Naive thymus-derived CD4-positive, alpha-beta T cell (primary cell): ENCODE measurements at regions of chr4 and their contacts with region 1.

Region 1: GRCh38 chr4:22688236-22688635 is 4.5 kb upstream of the GBA3 start:
- DNase-seq: no peak
- ATAC-seq: no peak
- H3K4me3 ChIP-seq: no peak overlapping the region
- H3K4me3 Mint-ChIP-seq: no peak overlapping the region
- H3K27ac ChIP-seq: no peak overlapping the region
- H3K27ac Mint-ChIP-seq: peak overlapping the region in 1 of 9 donors; percentile 60
- H3K4me1 ChIP-seq: no peaks in the 10 kb centered on the region
- H3K4me1 Mint-ChIP-seq: peaks cover 3 to 51% (median 31%) of the 10 kb centered on the region in 7 donors
- H3K27me3 ChIP-seq: no peaks in the 10 kb centered on the region
- H3K27me3 Mint-ChIP-seq: peaks cover 0 to 7% (median 0%) of the 10 kb centered on the region in 5 donors

Region 2: DNA sequence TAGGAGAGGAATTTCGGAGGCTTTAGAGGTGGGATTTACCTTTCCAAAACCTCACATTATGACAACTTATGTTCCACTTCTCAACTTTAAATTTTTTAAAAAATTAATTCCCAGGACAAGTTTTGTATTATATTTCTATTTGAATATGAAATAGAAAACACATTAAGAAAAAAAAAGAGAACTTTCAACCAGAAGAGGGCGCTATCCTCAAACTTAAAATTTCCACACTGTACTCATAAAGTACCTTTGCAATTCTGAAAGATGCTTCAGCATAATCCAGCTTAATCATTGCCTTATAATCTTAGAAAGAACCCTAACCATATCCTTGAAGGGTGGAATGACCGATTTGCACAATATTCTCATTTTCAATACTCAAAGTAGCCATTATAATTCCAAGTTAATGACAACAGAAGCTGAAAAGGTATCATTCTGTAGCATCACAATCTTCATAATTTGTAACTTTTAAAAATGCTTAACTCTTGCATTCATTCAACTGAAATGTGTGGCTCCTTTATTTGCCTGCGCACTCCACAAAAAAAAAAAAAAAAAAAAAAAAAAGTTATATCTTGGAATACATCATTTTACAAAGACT is 897.7 kb before region 1 on chr4:
- CTCF ChIA-PET with region 1: interaction called, 3 read pairs
- POLR2A ChIA-PET with region 1: no interaction called
- intact Hi-C with region 1: loop called (anchors 1 kb)
- DNase-seq: peak in 3 of 9 donors; percentile 5 to 13 (median 13)
- ATAC-seq: no peak
- H3K4me3 ChIP-seq: no peak overlapping the region
- H3K4me3 Mint-ChIP-seq: no peak overlapping the region
- H3K27ac ChIP-seq: no peak overlapping the region
- H3K27ac Mint-ChIP-seq: no peak overlapping the region
- H3K4me1 ChIP-seq: no peaks in the 10 kb centered on the region
- H3K4me1 Mint-ChIP-seq: peaks cover 0 to 2% (median 0%) of the 10 kb centered on the region in 7 donors
- H3K27me3 ChIP-seq: no peaks in the 10 kb centered on the region
- H3K27me3 Mint-ChIP-seq: peaks cover 0 to 4% (median 0%) of the 10 kb centered on the region in 5 donors

Region 3: GRCh38 chr4:22410645-22411247 is 277.5 kb before region 1 on chr4:
- CTCF ChIA-PET with region 1: interaction called, 55 read pairs
- POLR2A ChIA-PET with region 1: no interaction called
- intact Hi-C with region 1: loop called (anchors 1 kb)
- DNase-seq: peak in 5 of 9 donors; percentile 8 to 39 (median 18)
- ATAC-seq: no peak
- H3K4me3 ChIP-seq: no peak overlapping the region
- H3K4me3 Mint-ChIP-seq: no peak overlapping the region
- H3K27ac ChIP-seq: no peak overlapping the region
- H3K27ac Mint-ChIP-seq: no peak overlapping the region
- H3K4me1 ChIP-seq: no peaks in the 10 kb centered on the region
- H3K4me1 Mint-ChIP-seq: no peaks in the 10 kb centered on the region
- H3K27me3 ChIP-seq: no peaks in the 10 kb centered on the region
- H3K27me3 Mint-ChIP-seq: no peaks in the 10 kb centered on the region

Region 4: DNA sequence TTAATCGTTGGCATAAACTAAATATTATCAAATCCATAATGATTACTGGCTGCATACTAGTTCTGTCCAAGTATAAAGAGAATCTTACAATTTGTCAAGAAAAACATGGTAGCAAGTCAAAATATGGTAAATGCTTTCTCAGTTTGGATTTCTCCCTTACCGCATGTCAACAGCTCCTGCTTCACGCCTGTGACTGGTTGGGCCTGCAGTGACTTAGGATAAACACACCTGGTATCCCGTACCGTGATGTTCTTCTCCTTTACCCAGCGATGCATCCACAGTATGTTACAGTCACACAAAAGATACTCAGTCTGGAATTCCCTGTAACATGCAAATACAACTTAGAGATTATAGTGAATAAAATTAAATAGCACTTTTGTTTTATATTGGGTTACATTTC is 243.4 kb before region 1 on chr4:
- CTCF ChIA-PET with region 1: no interaction called
- POLR2A ChIA-PET with region 1: no interaction called
- intact Hi-C with region 1: loop called in 1 of 2 experiments (anchors 1 kb)
- DNase-seq: peak in 1 of 9 donors; percentile 7
- ATAC-seq: peak; percentile 29
- H3K4me3 ChIP-seq: no peak overlapping the region
- H3K4me3 Mint-ChIP-seq: peak overlapping the region; percentile 31 to 88 (median 80)
- H3K27ac ChIP-seq: peak overlapping the region; percentile 57
- H3K27ac Mint-ChIP-seq: peak overlapping the region; percentile 85 to 96 (median 94)
- H3K4me1 ChIP-seq: peaks cover 0 to 16% of the 10 kb centered on the region in 2 donors
- H3K4me1 Mint-ChIP-seq: peaks cover 0 to 63% (median 37%) of the 10 kb centered on the region in 7 donors
- H3K27me3 ChIP-seq: no peaks in the 10 kb centered on the region
- H3K27me3 Mint-ChIP-seq: no peaks in the 10 kb centered on the region

Region 5: DNA sequence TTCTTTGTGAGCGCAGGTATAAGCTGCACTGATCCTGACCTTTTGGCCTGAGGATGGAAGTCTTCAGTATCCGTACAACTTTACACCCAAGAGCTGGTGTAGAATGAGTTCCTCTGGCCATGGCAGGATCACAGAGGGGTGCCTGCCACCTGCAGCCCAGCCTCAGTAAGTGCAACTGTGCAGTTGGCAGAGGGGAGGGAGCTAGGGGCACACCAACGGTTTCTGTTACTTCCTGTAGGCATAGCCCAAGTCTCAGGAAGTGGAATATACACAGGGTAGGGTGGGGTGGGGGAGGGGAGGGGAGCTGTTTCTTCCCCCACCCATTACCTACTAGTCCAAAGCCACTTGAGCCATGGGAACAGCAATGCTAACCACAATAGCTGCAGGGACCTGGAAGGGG is 80.9 kb before region 1 on chr4:
- CTCF ChIA-PET with region 1: interaction called, 4 read pairs
- POLR2A ChIA-PET with region 1: no interaction called
- intact Hi-C with region 1: loop called (anchors 1 to 5 kb)
- DNase-seq: peak in 8 of 9 donors; percentile 16 to 74 (median 58)
- ATAC-seq: peak; percentile 97
- H3K4me3 ChIP-seq: no peak overlapping the region
- H3K4me3 Mint-ChIP-seq: peak overlapping the region in 5 of 10 donors; percentile 22 to 63 (median 42)
- H3K27ac ChIP-seq: no peak overlapping the region
- H3K27ac Mint-ChIP-seq: peak overlapping the region in 7 of 9 donors; percentile 13 to 84 (median 62)
- H3K4me1 ChIP-seq: peaks cover 0 to 27% of the 10 kb centered on the region in 2 donors
- H3K4me1 Mint-ChIP-seq: peaks cover 13 to 51% (median 46%) of the 10 kb centered on the region in 7 donors
- H3K27me3 ChIP-seq: no peaks in the 10 kb centered on the region
- H3K27me3 Mint-ChIP-seq: no peaks in the 10 kb centered on the region

Region 6: DNA sequence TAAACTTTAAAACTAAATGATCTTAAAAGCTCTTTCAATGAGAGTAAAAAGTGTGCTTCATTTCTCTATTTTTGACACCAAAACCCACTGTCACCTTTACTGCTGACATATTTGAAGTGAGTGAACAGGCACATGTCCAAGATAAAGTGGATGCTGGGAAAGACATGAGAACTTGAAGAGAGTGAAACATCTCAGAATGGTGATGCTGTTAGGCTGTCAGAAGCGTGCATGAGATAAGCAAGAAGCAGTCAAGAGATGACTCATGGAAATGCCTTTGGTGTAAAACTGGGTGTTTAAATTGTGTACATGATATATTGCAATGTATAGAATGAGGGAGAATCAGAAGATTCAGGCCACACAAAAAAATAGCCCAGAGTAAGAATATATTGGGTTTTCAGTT is 17.3 kb before region 1 on chr4:
- CTCF ChIA-PET with region 1: interaction called, 3 read pairs
- POLR2A ChIA-PET with region 1: no interaction called
- intact Hi-C with region 1: loop called in 1 of 2 experiments (anchors 1 kb)
- DNase-seq: no peak
- ATAC-seq: no peak
- H3K4me3 ChIP-seq: no peak overlapping the region
- H3K4me3 Mint-ChIP-seq: peak overlapping the region in 3 of 10 donors; percentile 7 to 62 (median 57)
- H3K27ac ChIP-seq: no peak overlapping the region
- H3K27ac Mint-ChIP-seq: peak overlapping the region in 7 of 9 donors; percentile 12 to 94 (median 71)
- H3K4me1 ChIP-seq: peaks cover 0 to 56% of the 10 kb centered on the region in 2 donors
- H3K4me1 Mint-ChIP-seq: peaks cover 41 to 92% (median 82%) of the 10 kb centered on the region in 7 donors
- H3K27me3 ChIP-seq: no peaks in the 10 kb centered on the region
- H3K27me3 Mint-ChIP-seq: no peaks in the 10 kb centered on the region

Region 7: DNA sequence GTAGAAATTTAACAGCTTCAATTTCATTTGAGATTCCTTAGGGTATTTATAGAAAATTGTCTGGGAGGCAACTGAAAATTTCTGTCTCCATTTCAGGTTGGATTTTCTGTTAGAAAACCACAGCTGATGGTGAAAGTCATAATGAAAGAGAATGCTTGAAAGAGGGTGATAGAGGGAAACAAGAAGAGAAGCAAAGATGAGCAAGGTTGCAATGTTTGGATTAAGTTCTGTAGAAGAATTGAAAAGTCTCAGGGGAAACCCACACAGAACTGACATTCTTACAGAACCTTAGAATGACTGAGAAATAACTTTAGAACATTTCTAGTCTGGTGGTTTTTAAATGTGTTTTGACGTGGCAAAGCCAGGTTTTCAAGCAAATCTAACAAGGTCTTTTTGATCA is 19.2 kb after region 1 on chr4:
- CTCF ChIA-PET with region 1: no interaction called
- POLR2A ChIA-PET with region 1: no interaction called
- intact Hi-C with region 1: no loop called
- DNase-seq: no peak
- ATAC-seq: no peak
- H3K4me3 ChIP-seq: no peak overlapping the region
- H3K4me3 Mint-ChIP-seq: no peak overlapping the region
- H3K27ac ChIP-seq: no peak overlapping the region
- H3K27ac Mint-ChIP-seq: no peak overlapping the region
- H3K4me1 ChIP-seq: no peaks in the 10 kb centered on the region
- H3K4me1 Mint-ChIP-seq: peaks cover 0 to 10% (median 0%) of the 10 kb centered on the region in 7 donors
- H3K27me3 ChIP-seq: no peaks in the 10 kb centered on the region
- H3K27me3 Mint-ChIP-seq: peaks cover 2 to 12% (median 10%) of the 10 kb centered on the region in 5 donors